ENCODE measurements at regions of chr4 and their contacts with region 1.

Region 1: DNA sequence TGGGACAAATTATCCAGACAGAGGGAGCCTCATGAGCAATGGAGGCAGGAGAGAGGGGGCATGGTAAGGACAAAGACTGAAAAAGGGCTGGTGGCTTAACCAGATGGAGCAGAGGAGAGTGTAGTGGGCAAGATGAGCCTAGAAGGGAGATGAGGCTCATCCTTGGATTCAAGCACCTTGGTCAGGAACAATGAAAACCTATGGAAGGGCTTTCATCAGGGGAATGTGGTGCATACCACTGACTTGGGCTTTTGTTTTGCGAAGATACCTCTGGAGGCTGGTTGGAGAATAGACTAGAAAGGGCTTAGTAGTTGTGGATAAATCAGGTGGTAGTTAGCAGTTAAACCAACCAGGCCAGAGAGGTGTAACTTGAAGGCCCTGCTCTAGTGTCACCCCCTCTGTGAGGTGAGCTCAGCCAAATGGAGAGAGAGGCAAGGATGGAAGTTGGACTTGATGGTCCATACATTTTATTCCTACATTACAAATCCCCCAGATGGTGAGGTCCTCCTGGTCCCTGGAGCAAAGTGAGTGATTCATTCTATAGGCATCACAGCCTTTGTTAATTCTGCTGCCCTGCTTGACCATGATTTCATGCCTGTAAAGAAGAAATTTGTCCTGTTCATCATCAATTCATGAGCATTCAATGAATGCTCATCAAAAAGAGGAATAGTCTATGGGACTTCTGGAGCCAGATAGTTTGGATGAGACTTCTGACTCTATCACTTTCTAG is 264.8 kb upstream of the IGFBP7 start:
- DNase-seq: no peak
- ATAC-seq: no peak

Region 2: DNA sequence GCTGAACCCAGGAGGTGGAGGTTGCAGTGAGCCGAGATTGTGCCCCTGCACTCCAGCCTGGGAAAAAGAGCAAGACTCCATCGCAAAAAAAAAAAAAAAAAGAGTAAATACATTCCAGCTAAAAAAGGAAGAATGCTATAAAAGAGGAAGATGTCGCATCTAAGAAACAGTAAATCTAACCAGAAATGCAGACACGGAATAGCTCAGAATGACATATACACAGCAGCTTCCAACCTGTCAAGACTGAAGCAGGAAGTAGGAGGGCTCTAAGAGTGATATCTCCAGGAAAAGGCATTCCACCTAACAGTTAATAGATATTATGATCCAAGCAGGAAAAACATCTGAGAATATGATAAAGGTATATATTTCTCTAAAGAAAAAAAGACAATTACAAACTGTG is 1844.3 kb before region 1 on chr4:
- intact Hi-C with region 1: loop called (anchors 5 kb)
- DNase-seq: no peak
- ATAC-seq: no peak

Measured in sciatic nerve (tissue), 2 donors.